SK-N-SH (cell line): ENCODE measurements at regions of chr7 and their contacts with region 1.

Region 1: DNA sequence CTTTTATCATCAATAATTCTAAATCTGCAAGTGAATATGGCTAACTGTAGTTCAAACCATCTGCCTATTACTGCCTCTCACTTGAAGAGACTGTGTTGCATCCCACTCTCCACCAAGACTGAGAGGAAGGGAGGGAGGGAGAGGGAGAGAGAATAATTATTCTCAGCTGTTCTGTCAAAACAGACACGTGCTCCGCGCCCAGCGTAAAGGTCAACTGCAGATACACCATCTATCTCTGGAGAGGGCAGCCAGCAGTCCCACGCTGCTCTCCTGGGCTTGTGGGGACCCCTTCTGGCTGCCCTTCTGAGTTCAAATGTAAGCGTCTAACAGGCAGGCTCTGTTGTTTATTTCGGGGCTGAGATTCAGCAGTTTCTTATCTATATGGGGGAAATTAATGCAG is 625.5 kb upstream of the GALNT17 start:
- DNase-seq: peak; percentile 82
- H3K4me3 ChIP-seq: no peak overlapping the region
- H3K27ac ChIP-seq: peak overlapping the region in 1 of 2 experiments; percentile 77; a peak in 2 of 4 replicates
- H3K4me1 ChIP-seq: peaks cover 0 to 23% of the 10 kb centered on the region in 2 experiments; a peak in 1 of 4 replicates
- H3K27me3 ChIP-seq: no peaks in the 10 kb centered on the region
- CTCF ChIP-seq: peak; percentile 40
- EP300 ChIP-seq: peak in 1 of 2 experiments; percentile 90; a peak in 2 of 4 replicates
- RAD21 ChIP-seq: peak; percentile 98

Region 2: GRCh38 chr7:70154521-70155180 is 351.8 kb before region 1 on chr7:
- CTCF ChIA-PET with region 1: interaction called, 18 read pairs
- POLR2A ChIA-PET with region 1: no interaction called
- DNase-seq: no peak
- H3K4me3 ChIP-seq: no peak overlapping the region
- H3K27ac ChIP-seq: no peak overlapping the region
- H3K4me1 ChIP-seq: no peaks in the 10 kb centered on the region; a peak in 1 of 4 replicates
- H3K27me3 ChIP-seq: no peaks in the 10 kb centered on the region
- CTCF ChIP-seq: no peak
- EP300 ChIP-seq: no peak
- RAD21 ChIP-seq: no peak

Region 3: GRCh38 chr7:70298780-70299481 is 207.5 kb before region 1 on chr7:
- CTCF ChIA-PET with region 1: interaction called, 11 read pairs
- POLR2A ChIA-PET with region 1: no interaction called
- DNase-seq: peak; percentile 73
- H3K4me3 ChIP-seq: no peak overlapping the region; a peak in 1 of 4 replicates
- H3K27ac ChIP-seq: peak overlapping the region in 1 of 2 experiments; percentile 96; a peak in 2 of 4 replicates
- H3K4me1 ChIP-seq: peaks cover 0 to 32% of the 10 kb centered on the region in 2 experiments; a peak in 2 of 4 replicates
- H3K27me3 ChIP-seq: no peaks in the 10 kb centered on the region
- CTCF ChIP-seq: no peak
- EP300 ChIP-seq: peak in 1 of 2 experiments; percentile 91; a peak in 2 of 4 replicates
- RAD21 ChIP-seq: peak; percentile 43

Region 4: DNA sequence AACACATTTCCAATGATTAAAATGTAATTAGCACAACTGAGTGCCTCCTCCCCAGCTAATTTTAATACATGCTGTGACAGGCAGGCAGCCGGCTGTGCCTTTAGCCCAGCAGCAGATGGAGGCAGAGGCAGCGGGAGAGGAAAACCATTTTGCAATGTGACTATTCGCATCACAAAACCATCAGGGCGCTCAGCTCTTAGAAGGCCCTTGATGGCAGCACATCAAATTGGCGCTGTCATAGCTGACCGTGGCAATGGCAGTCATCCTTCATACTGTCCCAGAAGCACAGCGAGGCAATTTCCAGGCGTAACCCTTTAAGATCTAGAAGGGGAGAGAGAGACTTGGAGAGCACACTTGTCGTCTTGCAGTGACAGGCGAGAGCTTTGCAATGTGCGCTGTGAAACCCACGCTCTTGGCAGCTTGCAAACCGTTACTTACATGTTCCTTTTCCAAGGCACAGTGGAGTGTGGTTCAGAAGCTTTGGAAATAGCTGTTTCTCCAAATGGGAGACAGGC is 89.2 kb before region 1 on chr7:
- CTCF ChIA-PET with region 1: interaction called, 12 read pairs
- POLR2A ChIA-PET with region 1: no interaction called
- DNase-seq: peak; percentile 41
- H3K4me3 ChIP-seq: no peak overlapping the region
- H3K27ac ChIP-seq: peak overlapping the region in 1 of 2 experiments; percentile 51; a peak in 2 of 4 replicates
- H3K4me1 ChIP-seq: peaks cover 0 to 31% of the 10 kb centered on the region in 2 experiments; a peak in 2 of 4 replicates
- H3K27me3 ChIP-seq: no peaks in the 10 kb centered on the region
- CTCF ChIP-seq: no peak
- EP300 ChIP-seq: no peak
- RAD21 ChIP-seq: peak; percentile 54

Region 5: GRCh38 chr7:70492625-70493024 is 13.8 kb before region 1 on chr7:
- CTCF ChIA-PET with region 1: interaction called, 25 read pairs
- POLR2A ChIA-PET with region 1: no interaction called
- DNase-seq: peak; percentile 53
- H3K4me3 ChIP-seq: no peak overlapping the region
- H3K27ac ChIP-seq: no peak overlapping the region
- H3K4me1 ChIP-seq: peaks cover 0 to 6% of the 10 kb centered on the region in 2 experiments; a peak in 2 of 4 replicates
- H3K27me3 ChIP-seq: no peaks in the 10 kb centered on the region
- CTCF ChIP-seq: no peak
- EP300 ChIP-seq: no peak
- RAD21 ChIP-seq: peak; percentile 54

Region 6: DNA sequence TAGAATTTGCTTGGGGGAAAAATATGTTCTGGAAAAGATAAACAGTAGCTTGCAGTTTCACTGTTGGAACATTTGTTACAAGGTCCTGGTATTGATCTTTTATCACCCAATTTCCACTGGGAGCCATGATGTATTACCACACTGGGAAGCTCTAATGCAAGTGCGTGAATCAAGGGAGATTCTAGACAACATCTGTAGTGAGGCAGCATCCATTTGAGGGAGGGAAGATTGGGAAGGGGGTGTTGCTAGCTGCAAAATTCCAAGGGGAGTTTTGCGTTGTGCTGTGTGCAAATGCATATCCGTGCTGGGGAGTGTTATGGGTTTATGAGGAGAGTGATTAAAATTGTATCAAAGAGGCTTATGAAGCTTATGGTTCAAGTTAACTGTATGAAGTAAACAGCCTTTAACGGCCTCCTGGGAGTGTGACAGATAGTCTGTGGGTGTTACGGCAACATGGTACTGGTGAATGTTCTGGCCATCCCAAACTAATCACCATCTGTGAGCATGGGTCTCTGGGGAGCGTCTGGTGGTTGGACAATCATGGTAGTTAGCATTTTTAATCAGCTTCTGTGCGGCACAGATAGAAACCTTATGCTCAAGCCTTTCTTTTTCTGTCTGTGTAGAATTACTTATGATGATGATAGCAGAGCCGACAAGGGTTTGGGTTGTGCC is 23.6 kb after region 1 on chr7:
- CTCF ChIA-PET with region 1: interaction called, 14 read pairs
- POLR2A ChIA-PET with region 1: no interaction called
- DNase-seq: peak; percentile 53
- H3K4me3 ChIP-seq: no peak overlapping the region
- H3K27ac ChIP-seq: peak overlapping the region in 1 of 2 experiments; percentile 65; a peak in 2 of 4 replicates
- H3K4me1 ChIP-seq: peaks cover 0 to 15% of the 10 kb centered on the region in 2 experiments; a peak in 1 of 4 replicates
- H3K27me3 ChIP-seq: no peaks in the 10 kb centered on the region
- CTCF ChIP-seq: no peak
- EP300 ChIP-seq: peak in 1 of 2 experiments; percentile 55; a peak in 1 of 4 replicates
- RAD21 ChIP-seq: peak; percentile 7; the same call in 1 of the 2 replicates

Region 7: GRCh38 chr7:71005109-71005508 is 498.7 kb after region 1 on chr7:
- CTCF ChIA-PET with region 1: no interaction called
- POLR2A ChIA-PET with region 1: no interaction called
- DNase-seq: no peak
- H3K4me3 ChIP-seq: no peak overlapping the region
- H3K27ac ChIP-seq: no peak overlapping the region
- H3K4me1 ChIP-seq: no peaks in the 10 kb centered on the region
- H3K27me3 ChIP-seq: no peaks in the 10 kb centered on the region
- CTCF ChIP-seq: no peak
- EP300 ChIP-seq: no peak
- RAD21 ChIP-seq: no peak